Activated B cell treated with CpG ODN at 0.5 μM for 24 hours (primary cell): ENCODE measurements at regions of chr11 and their contacts with region 1.

Region 1: GRCh38 chr11:59429924-59430516 is 3.8 kb upstream of the OR5A2 start:
- DNase-seq: no peak
- ATAC-seq: peak; percentile 87
- H3K4me3 Mint-ChIP-seq: no peak overlapping the region
- H3K27ac Mint-ChIP-seq: no peak overlapping the region
- H3K4me1 Mint-ChIP-seq: no peaks in the 10 kb centered on the region
- H3K27me3 Mint-ChIP-seq: peaks cover 9% of the 10 kb centered on the region
- CTCF ChIP-seq: peak; percentile 50

Region 2: GRCh38 chr11:58654079-58654907 is 775.7 kb before region 1 on chr11:
- CTCF ChIA-PET with region 1: no interaction called
- POLR2A ChIA-PET with region 1: no interaction called
- intact Hi-C with region 1: loop called (anchors 10 kb)
- DNase-seq: peak; percentile 69
- ATAC-seq: peak; percentile 99
- H3K4me3 Mint-ChIP-seq: no peak overlapping the region
- H3K27ac Mint-ChIP-seq: no peak overlapping the region
- H3K4me1 Mint-ChIP-seq: peaks cover 5% of the 10 kb centered on the region
- H3K27me3 Mint-ChIP-seq: no peaks in the 10 kb centered on the region
- CTCF ChIP-seq: peak; percentile 25

Region 3: GRCh38 chr11:58958500-58958899 is 471.5 kb before region 1 on chr11:
- CTCF ChIA-PET with region 1: interaction called, 3 read pairs
- POLR2A ChIA-PET with region 1: no interaction called
- intact Hi-C with region 1: loop called (anchors 10 kb)
- DNase-seq: peak; percentile 42
- ATAC-seq: peak; percentile 82
- H3K4me3 Mint-ChIP-seq: no peak overlapping the region
- H3K27ac Mint-ChIP-seq: no peak overlapping the region
- H3K4me1 Mint-ChIP-seq: peaks cover 2% of the 10 kb centered on the region
- H3K27me3 Mint-ChIP-seq: no peaks in the 10 kb centered on the region
- CTCF ChIP-seq: no peak

Region 4: DNA sequence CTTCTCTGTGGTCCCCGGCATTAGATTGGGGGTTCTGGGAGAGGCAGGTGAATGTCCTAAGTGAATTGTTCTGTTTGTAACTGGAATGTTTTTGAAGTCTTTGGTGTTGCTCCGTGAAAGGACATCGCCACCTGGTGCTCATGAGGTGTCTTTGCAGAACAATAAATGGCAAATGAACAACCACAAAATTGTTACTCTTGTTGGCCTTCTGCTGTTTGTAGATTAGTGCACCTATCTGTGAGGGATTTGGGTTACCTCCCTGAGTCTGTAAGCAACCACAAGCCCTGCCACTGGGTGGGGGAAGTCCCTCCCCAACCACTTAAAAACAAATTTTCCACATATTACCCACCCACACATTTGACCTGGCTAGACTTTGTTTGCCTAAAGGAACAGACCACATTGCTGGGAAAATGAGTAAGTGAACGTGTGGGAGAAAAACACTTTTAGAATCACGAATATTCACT is 222.0 kb before region 1 on chr11:
- CTCF ChIA-PET with region 1: interaction called, 5 read pairs
- POLR2A ChIA-PET with region 1: no interaction called
- intact Hi-C with region 1: loop called (anchors 1 kb)
- DNase-seq: no peak
- ATAC-seq: peak; percentile 45
- H3K4me3 Mint-ChIP-seq: peak overlapping the region; percentile 98
- H3K27ac Mint-ChIP-seq: peak overlapping the region; percentile 93
- H3K4me1 Mint-ChIP-seq: peaks cover 93% of the 10 kb centered on the region
- H3K27me3 Mint-ChIP-seq: no peaks in the 10 kb centered on the region
- CTCF ChIP-seq: no peak

Region 5: DNA sequence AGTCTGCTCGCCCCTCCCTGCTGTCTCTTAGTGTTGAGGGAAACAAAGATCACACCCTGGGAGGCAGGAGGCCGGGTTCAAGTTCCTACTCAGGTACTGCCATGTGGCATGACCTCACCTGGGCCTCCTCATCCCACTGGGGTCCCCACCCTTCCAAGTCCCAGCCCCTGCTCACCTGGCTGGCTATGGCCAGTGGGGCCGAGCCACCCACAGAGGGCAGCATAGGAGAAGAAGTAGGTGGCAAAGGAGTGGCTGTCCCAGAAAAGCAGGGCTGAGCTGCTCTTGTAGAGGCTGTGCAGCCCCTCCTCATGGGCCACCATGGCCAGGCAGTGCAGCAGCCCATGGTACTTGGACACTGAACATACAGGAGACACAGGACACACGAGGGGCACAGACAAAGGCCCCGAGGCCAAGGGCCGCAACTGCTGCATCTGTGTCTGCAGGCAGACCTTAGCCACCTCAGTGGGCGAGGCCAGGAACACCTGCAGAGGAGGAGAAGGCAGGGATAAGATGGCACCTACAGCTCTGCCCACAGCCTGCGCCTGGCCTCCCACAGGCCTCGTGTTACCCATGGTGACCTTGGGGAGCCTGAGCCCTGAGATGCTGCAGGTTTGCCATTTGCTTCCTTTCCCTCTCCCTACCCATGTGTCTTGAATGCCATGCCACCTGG is 166.7 kb before region 1 on chr11:
- CTCF ChIA-PET with region 1: interaction called, 43 read pairs
- POLR2A ChIA-PET with region 1: no interaction called
- intact Hi-C with region 1: loop called (anchors 1 kb)
- DNase-seq: peak; percentile 52
- ATAC-seq: peak; percentile 65
- H3K4me3 Mint-ChIP-seq: no peak overlapping the region
- H3K27ac Mint-ChIP-seq: no peak overlapping the region
- H3K4me1 Mint-ChIP-seq: peaks cover 71% of the 10 kb centered on the region
- H3K27me3 Mint-ChIP-seq: no peaks in the 10 kb centered on the region
- CTCF ChIP-seq: no peak

Region 6: GRCh38 chr11:59641156-59641555 is 211.1 kb after region 1 on chr11:
- CTCF ChIA-PET with region 1: no interaction called
- POLR2A ChIA-PET with region 1: no interaction called
- intact Hi-C with region 1: no loop called
- DNase-seq: no peak
- ATAC-seq: no peak
- H3K4me3 Mint-ChIP-seq: no peak overlapping the region
- H3K27ac Mint-ChIP-seq: no peak overlapping the region
- H3K4me1 Mint-ChIP-seq: no peaks in the 10 kb centered on the region
- H3K27me3 Mint-ChIP-seq: no peaks in the 10 kb centered on the region
- CTCF ChIP-seq: no peak

Region 7: GRCh38 chr11:59680287-59681154 is 250.5 kb after region 1 on chr11:
- CTCF ChIA-PET with region 1: interaction called, 3 read pairs
- POLR2A ChIA-PET with region 1: no interaction called
- intact Hi-C with region 1: loop called (anchors 5 kb)
- DNase-seq: peak; percentile 32
- ATAC-seq: peak; percentile 88
- H3K4me3 Mint-ChIP-seq: no peak overlapping the region
- H3K27ac Mint-ChIP-seq: no peak overlapping the region
- H3K4me1 Mint-ChIP-seq: no peaks in the 10 kb centered on the region
- H3K27me3 Mint-ChIP-seq: peaks cover 9% of the 10 kb centered on the region
- CTCF ChIP-seq: no peak